ENCODE measurements at regions of chr2 and their contacts with region 1.

Region 1: GRCh38 chr2:165953655-165954606 is at the start of gene TTC21B:
- DNase-seq: peak; percentile 93
- H3K4me3 Mint-ChIP-seq: peak within 1 kb of the TSS; percentile 53
- H3K27ac Mint-ChIP-seq: no peak within 1 kb of the TSS
- H3K4me1 Mint-ChIP-seq: peaks cover 13% of the 10 kb centered on the region
- H3K27me3 Mint-ChIP-seq: no peaks in the 10 kb centered on the region
- total RNA-seq, gene TTC21B: 22.6 TPM

Region 2: GRCh38 chr2:164992818-164993217 is 961.1 kb before region 1 on chr2:
- CTCF ChIA-PET with region 1: no interaction called
- intact Hi-C with region 1: loop called (anchors 5 kb)
- DNase-seq: peak; percentile 64
- H3K4me3 Mint-ChIP-seq: no peak overlapping the region
- H3K27ac Mint-ChIP-seq: no peak overlapping the region
- H3K4me1 Mint-ChIP-seq: peaks cover 11% of the 10 kb centered on the region
- H3K27me3 Mint-ChIP-seq: no peaks in the 10 kb centered on the region

Region 3: GRCh38 chr2:165401285-165401852 is 552.6 kb before region 1 on chr2:
- CTCF ChIA-PET with region 1: no interaction called
- intact Hi-C with region 1: loop called (anchors 5 kb)
- DNase-seq: peak; percentile 23
- H3K4me3 Mint-ChIP-seq: no peak overlapping the region
- H3K27ac Mint-ChIP-seq: no peak overlapping the region
- H3K4me1 Mint-ChIP-seq: peaks cover 6% of the 10 kb centered on the region
- H3K27me3 Mint-ChIP-seq: peaks cover 16% of the 10 kb centered on the region

Region 4: DNA sequence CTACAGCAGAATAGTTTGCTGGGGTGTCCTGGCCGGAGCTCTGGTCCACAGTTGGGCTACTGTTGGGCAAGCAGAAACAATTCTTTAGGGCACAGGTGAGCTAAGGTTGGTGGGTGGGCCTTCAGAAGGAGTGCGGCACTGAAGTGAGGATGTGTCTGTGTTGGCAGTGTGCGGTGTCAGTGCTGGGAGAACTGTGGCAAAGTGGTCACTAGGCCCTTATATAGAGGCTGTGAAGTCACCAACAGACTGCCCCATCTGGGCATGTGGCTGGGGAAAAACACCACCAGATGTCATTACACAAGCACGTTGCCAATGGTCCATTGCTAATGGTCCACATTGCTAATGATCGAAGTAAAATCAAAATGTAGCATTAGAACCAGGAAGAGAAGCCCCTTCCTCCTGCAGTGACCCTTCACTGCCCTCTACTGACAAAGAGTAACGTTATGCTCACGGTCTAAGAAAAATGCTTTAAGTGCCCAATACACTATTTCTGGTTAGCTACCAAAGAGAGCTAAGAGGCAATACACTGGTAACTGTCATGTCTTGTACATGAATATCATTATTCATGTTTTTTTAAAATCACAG is 152.6 kb after region 1 on chr2:
- CTCF ChIA-PET with region 1: interaction called, 3 read pairs
- intact Hi-C with region 1: loop called (anchors 1 kb)
- DNase-seq: no peak
- H3K4me3 Mint-ChIP-seq: no peak overlapping the region
- H3K27ac Mint-ChIP-seq: no peak overlapping the region
- H3K4me1 Mint-ChIP-seq: no peaks in the 10 kb centered on the region
- H3K27me3 Mint-ChIP-seq: no peaks in the 10 kb centered on the region

Region 5: GRCh38 chr2:166180951-166181812 is 227.3 kb after region 1 on chr2:
- CTCF ChIA-PET with region 1: no interaction called
- intact Hi-C with region 1: loop called (anchors 1 kb)
- DNase-seq: peak; percentile 56
- H3K4me3 Mint-ChIP-seq: no peak overlapping the region
- H3K27ac Mint-ChIP-seq: no peak overlapping the region
- H3K4me1 Mint-ChIP-seq: no peaks in the 10 kb centered on the region
- H3K27me3 Mint-ChIP-seq: peaks cover 7% of the 10 kb centered on the region